ENCODE measurements at regions of chr20 and their contacts with region 1.

Region 1: GRCh38 chr20:8284902-8285301 is 152.8 kb downstream of the PLCB1 start:
- DNase-seq: no peak
- H3K4me3 Mint-ChIP-seq: no peak overlapping the region
- H3K27ac Mint-ChIP-seq: no peak overlapping the region
- H3K4me1 Mint-ChIP-seq: no peaks in the 10 kb centered on the region
- H3K27me3 Mint-ChIP-seq: no peaks in the 10 kb centered on the region

Region 2: DNA sequence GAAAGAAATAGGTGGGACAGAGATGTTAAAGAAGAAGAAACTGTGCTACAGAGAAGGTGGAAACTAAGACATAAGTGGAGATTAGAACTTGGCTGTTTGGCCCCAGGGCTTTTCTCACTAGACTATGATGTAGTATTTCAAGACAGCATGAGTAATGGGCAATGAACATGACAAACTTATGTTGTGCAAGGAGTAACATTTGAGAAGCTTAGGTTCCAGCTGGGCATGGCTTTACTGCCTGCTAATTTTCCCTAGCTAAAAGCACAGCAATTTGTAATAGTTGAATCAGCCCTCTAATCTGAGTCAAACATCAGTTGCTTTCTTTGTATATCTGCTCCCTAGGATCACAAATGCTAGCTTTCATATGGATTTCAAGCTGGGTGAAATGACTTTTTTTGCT is 1811.7 kb before region 1 on chr20:
- intact Hi-C with region 1: loop called (anchors 5 kb)
- DNase-seq: no peak
- H3K4me3 Mint-ChIP-seq: no peak overlapping the region
- H3K27ac Mint-ChIP-seq: no peak overlapping the region
- H3K4me1 Mint-ChIP-seq: no peaks in the 10 kb centered on the region
- H3K27me3 Mint-ChIP-seq: no peaks in the 10 kb centered on the region

Measured in activated T-helper 1 cell treated with anti-CD3 and anti-CD28 coated beads, Interleukin-12 subunit alpha, Interleukin-12 subunit beta, Interleukin-2, Interleukin-4 antibody, amounts not matched to agents 30 ng/mL and 10 ng/mL and 1 ng/mL, durations not matched to agents 14 hours and 24 hours and 36 hours (primary cell).